ENCODE measurements at regions of chr10 and their contacts with region 1.

Region 1: DNA sequence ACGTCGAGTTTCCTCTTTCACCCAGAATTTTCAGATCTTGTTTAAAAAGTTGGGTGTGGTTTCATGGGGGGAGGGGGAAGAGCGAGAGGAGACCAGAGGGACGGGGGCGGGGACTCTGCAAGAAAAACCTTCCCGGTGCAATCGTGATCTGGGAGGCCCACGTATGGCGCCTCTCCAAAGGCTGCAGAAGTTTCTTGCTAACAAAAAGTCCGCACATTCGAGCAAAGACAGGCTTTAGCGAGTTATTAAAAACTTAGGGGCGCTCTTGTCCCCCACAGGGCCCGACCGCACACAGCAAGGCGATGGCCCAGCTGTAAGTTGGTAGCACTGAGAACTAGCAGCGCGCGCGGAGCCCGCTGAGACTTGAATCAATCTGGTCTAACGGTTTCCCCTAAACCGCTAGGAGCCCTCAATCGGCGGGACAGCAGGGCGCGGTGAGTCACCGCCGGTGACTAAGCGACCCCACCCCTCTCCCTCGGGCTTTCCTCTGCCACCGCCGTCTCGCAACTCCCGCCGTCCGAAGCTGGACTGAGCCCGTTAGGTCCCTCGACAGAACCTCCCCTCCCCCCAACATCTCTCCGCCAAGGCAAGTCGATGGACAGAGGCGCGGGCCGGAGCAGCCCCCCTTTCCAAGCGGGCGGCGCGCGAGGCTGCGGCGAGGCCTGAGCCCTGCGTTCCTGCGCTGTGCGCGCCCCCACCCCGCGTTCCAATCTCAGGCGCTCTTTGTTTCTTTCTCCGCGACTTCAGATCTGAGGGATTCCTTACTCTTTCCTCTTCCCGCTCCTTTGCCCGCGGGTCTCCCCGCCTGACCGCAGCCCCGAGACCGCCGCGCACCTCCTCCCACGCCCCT is at the start of gene VIM:
- DNase-seq: peak; percentile 65 to 93 (median 88)
- ATAC-seq: peak; percentile 26
- H3K4me3 ChIP-seq: peak within 1 kb of the TSS; percentile 76 to 82
- H3K4me3 Mint-ChIP-seq: peak within 1 kb of the TSS; percentile 99
- H3K27ac ChIP-seq: peak within 1 kb of the TSS; percentile 92 to 98
- H3K27ac Mint-ChIP-seq: peak within 1 kb of the TSS; percentile 100
- H3K4me1 ChIP-seq: peaks cover 41% of the 10 kb centered on the region
- H3K4me1 Mint-ChIP-seq: peaks cover 50% of the 10 kb centered on the region
- H3K27me3 ChIP-seq: no peaks in the 10 kb centered on the region
- H3K27me3 Mint-ChIP-seq: no peaks in the 10 kb centered on the region
- CTCF ChIP-seq: no peak
- total RNA-seq, gene VIM: 776 to 783 TPM

Region 2: GRCh38 chr10:16817125-16818019 is 410.9 kb before region 1 on chr10 and contains the start of gene RSU1:
- CTCF ChIA-PET with region 1: interaction called, 6 read pairs
- POLR2A ChIA-PET with region 1: interaction called, 32 read pairs
- intact Hi-C with region 1: loop called (anchors 1 kb)
- DNase-seq: peak; percentile 100
- ATAC-seq: peak; percentile 96
- H3K4me3 ChIP-seq: peak within 1 kb of the TSS; percentile 71 to 75
- H3K4me3 Mint-ChIP-seq: peak within 1 kb of the TSS; percentile 95
- H3K27ac ChIP-seq: peak within 1 kb of the TSS; percentile 75 to 92
- H3K27ac Mint-ChIP-seq: peak within 1 kb of the TSS; percentile 95
- H3K4me1 ChIP-seq: peaks cover 22% of the 10 kb centered on the region
- H3K4me1 Mint-ChIP-seq: peaks cover 38% of the 10 kb centered on the region
- H3K27me3 ChIP-seq: no peaks in the 10 kb centered on the region
- H3K27me3 Mint-ChIP-seq: no peaks in the 10 kb centered on the region
- CTCF ChIP-seq: no peak
- total RNA-seq, gene RSU1: 23.8 to 26.1 TPM

Region 3: GRCh38 chr10:16909961-16910792 is 318.1 kb before region 1 on chr10:
- CTCF ChIA-PET with region 1: no interaction called
- POLR2A ChIA-PET with region 1: no interaction called
- intact Hi-C with region 1: loop called in 1 of 2 experiments (anchors 5 kb)
- DNase-seq: no peak
- ATAC-seq: no peak
- H3K4me3 ChIP-seq: no peak overlapping the region
- H3K4me3 Mint-ChIP-seq: no peak overlapping the region
- H3K27ac ChIP-seq: no peak overlapping the region
- H3K27ac Mint-ChIP-seq: no peak overlapping the region
- H3K4me1 ChIP-seq: no peaks in the 10 kb centered on the region
- H3K4me1 Mint-ChIP-seq: peaks cover 2% of the 10 kb centered on the region
- H3K27me3 ChIP-seq: no peaks in the 10 kb centered on the region
- H3K27me3 Mint-ChIP-seq: no peaks in the 10 kb centered on the region
- CTCF ChIP-seq: no peak

Region 4: GRCh38 chr10:17029581-17030271 is 198.6 kb before region 1 on chr10:
- CTCF ChIA-PET with region 1: no interaction called
- POLR2A ChIA-PET with region 1: interaction called, 5 read pairs
- intact Hi-C with region 1: loop called (anchors 1 to 2 kb)
- DNase-seq: peak; percentile 45 to 91 (median 74)
- ATAC-seq: peak; percentile 48
- H3K4me3 ChIP-seq: peak overlapping the region; percentile 47 to 58
- H3K4me3 Mint-ChIP-seq: peak overlapping the region; percentile 79
- H3K27ac ChIP-seq: peak overlapping the region; percentile 63 to 88
- H3K27ac Mint-ChIP-seq: peak overlapping the region; percentile 96
- H3K4me1 ChIP-seq: peaks cover 76% of the 10 kb centered on the region
- H3K4me1 Mint-ChIP-seq: peaks cover 89% of the 10 kb centered on the region
- H3K27me3 ChIP-seq: no peaks in the 10 kb centered on the region
- H3K27me3 Mint-ChIP-seq: no peaks in the 10 kb centered on the region
- CTCF ChIP-seq: no peak

Region 5: GRCh38 chr10:17206210-17206709 is 22.1 kb before region 1 on chr10:
- CTCF ChIA-PET with region 1: interaction called, 22 read pairs
- POLR2A ChIA-PET with region 1: interaction called, 111 read pairs
- intact Hi-C with region 1: loop called (anchors 1 kb)
- DNase-seq: peak in 6 of 9 experiments; percentile 11 to 85 (median 64)
- ATAC-seq: peak; percentile 70
- H3K4me3 ChIP-seq: no peak overlapping the region
- H3K4me3 Mint-ChIP-seq: peak overlapping the region; percentile 1
- H3K27ac ChIP-seq: peak overlapping the region; percentile 66 to 74
- H3K27ac Mint-ChIP-seq: peak overlapping the region; percentile 88
- H3K4me1 ChIP-seq: peaks cover 23% of the 10 kb centered on the region
- H3K4me1 Mint-ChIP-seq: peaks cover 25% of the 10 kb centered on the region
- H3K27me3 ChIP-seq: no peaks in the 10 kb centered on the region
- H3K27me3 Mint-ChIP-seq: no peaks in the 10 kb centered on the region
- CTCF ChIP-seq: no peak

Region 6: GRCh38 chr10:17257466-17258321 is 29.4 kb after region 1 on chr10:
- CTCF ChIA-PET with region 1: interaction called, 4 read pairs
- POLR2A ChIA-PET with region 1: interaction called, 5 read pairs
- intact Hi-C with region 1: loop called in 1 of 2 experiments (anchors 2 kb)
- DNase-seq: peak in 8 of 9 experiments; percentile 13 to 81 (median 57)
- ATAC-seq: peak; percentile 78
- H3K4me3 ChIP-seq: no peak overlapping the region
- H3K4me3 Mint-ChIP-seq: no peak overlapping the region
- H3K27ac ChIP-seq: no peak overlapping the region
- H3K27ac Mint-ChIP-seq: no peak overlapping the region
- H3K4me1 ChIP-seq: peaks cover 3% of the 10 kb centered on the region
- H3K4me1 Mint-ChIP-seq: peaks cover 4% of the 10 kb centered on the region
- H3K27me3 ChIP-seq: no peaks in the 10 kb centered on the region
- H3K27me3 Mint-ChIP-seq: no peaks in the 10 kb centered on the region
- CTCF ChIP-seq: peak; percentile 87

Region 7: GRCh38 chr10:17527516-17528146 is 299.3 kb after region 1 on chr10:
- CTCF ChIA-PET with region 1: no interaction called
- POLR2A ChIA-PET with region 1: no interaction called
- intact Hi-C with region 1: no loop called
- DNase-seq: no peak
- ATAC-seq: no peak
- H3K4me3 ChIP-seq: no peak overlapping the region
- H3K4me3 Mint-ChIP-seq: no peak overlapping the region
- H3K27ac ChIP-seq: no peak overlapping the region
- H3K27ac Mint-ChIP-seq: no peak overlapping the region
- H3K4me1 ChIP-seq: no peaks in the 10 kb centered on the region
- H3K4me1 Mint-ChIP-seq: no peaks in the 10 kb centered on the region
- H3K27me3 ChIP-seq: no peaks in the 10 kb centered on the region
- H3K27me3 Mint-ChIP-seq: peaks cover 9% of the 10 kb centered on the region
- CTCF ChIP-seq: no peak